H1 (cell line): ENCODE measurements at regions of chr1 and their contacts with region 1.

Region 1: DNA sequence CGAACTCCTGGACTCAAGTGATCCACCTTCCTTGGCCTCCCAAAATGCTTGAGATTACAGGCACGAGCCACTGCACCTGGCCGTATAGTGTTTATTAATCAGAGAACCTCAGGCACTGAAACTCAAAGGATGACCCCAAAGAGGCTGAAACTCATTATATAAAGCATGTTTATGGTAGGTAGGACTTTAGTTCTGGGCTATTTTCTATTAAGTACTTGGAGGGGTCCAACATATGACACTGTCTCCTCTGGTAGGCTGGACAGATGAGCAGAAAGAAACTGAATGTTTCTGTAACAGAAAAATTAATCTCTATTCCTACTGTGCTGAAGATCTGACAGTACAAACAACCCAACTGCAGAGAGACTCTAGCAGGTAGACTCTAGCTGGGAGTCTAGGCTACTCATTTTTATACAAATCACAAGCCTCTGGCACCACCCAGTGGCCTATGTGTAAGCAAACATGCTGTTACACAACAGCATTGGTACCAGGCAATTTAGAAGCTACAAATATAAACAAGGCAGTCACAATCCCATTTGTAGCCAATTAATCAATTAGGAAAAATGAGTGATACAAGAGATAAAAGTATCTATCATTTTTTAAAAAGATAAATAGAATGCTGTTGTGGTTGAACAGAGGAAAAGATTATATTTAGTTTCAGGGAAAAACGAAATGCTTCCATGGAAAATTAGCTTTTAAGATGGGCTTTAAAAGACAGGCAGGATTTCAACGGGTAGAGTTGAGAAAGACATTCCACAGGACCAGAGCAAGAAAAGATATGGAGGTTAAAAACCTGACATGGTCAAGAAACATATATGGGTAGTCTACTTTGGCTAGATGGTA is 10.4 kb downstream of the DCAF8 start:
- DNase-seq: no peak
- H3K4me3 ChIP-seq: no peak overlapping the region
- H3K27ac ChIP-seq: no peak overlapping the region
- H3K4me1 ChIP-seq: no peaks in the 10 kb centered on the region; a peak in 1 of 7 replicates
- H3K27me3 ChIP-seq: no peaks in the 10 kb centered on the region
- CTCF ChIP-seq: peak in 2 of 3 experiments; percentile 76 to 78; a peak in 3 of 4 replicates
- EP300 ChIP-seq: no peak
- POLR2A ChIP-seq: no peak
- RAD21 ChIP-seq: peak; percentile 84 to 91

Region 2: GRCh38 chr1:160066829-160067745 is 184.8 kb before region 1 on chr1:
- CTCF ChIA-PET with region 1: no interaction called
- POLR2A ChIA-PET with region 1: no interaction called
- DNase-seq: no peak
- H3K4me3 ChIP-seq: peak overlapping the region in 1 of 4 experiments; percentile 7; a peak in 1 of 8 replicates
- H3K27ac ChIP-seq: no peak overlapping the region
- H3K4me1 ChIP-seq: peaks cover 5 to 19% (median 11%) of the 10 kb centered on the region in 4 experiments
- H3K27me3 ChIP-seq: peaks cover 0 to 14% (median 10%) of the 10 kb centered on the region in 4 experiments; a peak in 6 of 7 replicates
- CTCF ChIP-seq: no peak
- EP300 ChIP-seq: no peak
- POLR2A ChIP-seq: no peak
- RAD21 ChIP-seq: no peak

Region 3: DNA sequence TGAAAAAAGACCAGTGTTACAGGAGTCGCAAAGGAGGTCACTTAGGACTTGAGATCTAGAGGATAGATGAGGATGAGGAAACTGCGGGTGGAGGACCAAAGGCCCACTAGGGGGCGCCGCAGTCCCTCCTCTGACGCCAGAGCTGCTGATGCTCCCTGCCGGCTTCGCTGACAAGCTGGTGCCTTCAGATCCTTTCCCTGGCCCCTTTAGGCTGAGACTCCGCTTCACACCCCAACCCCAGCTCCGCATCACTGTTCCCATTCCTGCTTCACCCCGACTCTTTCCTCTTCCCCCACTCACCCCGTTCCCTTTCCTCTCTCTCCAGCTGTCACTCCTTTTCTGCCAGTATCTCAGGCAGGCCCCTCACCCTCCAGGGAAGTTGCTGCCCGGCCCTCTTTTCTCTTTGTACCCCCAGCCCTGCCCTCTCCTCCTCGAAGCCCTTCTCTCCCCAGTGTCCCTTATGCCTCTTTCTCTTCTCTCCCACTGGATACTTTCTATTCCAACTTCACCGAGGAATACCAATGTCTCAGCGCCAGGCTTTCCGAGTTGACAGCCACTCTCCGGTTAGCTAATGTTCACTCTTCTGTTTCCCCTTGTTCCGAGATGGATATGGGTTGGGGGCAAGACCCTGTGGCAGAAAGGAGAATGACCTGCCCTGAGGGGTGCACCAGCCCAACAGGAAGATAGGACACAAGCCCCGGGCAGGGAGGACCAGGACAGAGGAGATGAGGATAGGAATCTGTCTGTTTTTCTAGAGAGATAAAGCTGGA is 166.0 kb before region 1 on chr1:
- CTCF ChIA-PET with region 1: interaction called, 14 read pairs
- POLR2A ChIA-PET with region 1: interaction called, 3 read pairs
- DNase-seq: peak; percentile 88 to 96
- H3K4me3 ChIP-seq: no peak overlapping the region
- H3K27ac ChIP-seq: no peak overlapping the region
- H3K4me1 ChIP-seq: peaks cover 0 to 5% (median 3%) of the 10 kb centered on the region in 4 experiments; a peak in 4 of 7 replicates
- H3K27me3 ChIP-seq: peaks cover 0 to 35% (median 27%) of the 10 kb centered on the region in 4 experiments; a peak in 6 of 7 replicates
- CTCF ChIP-seq: peak; percentile 91 to 99 (median 95)
- EP300 ChIP-seq: no peak
- POLR2A ChIP-seq: no peak
- RAD21 ChIP-seq: peak; percentile 83 to 88

Region 4: DNA sequence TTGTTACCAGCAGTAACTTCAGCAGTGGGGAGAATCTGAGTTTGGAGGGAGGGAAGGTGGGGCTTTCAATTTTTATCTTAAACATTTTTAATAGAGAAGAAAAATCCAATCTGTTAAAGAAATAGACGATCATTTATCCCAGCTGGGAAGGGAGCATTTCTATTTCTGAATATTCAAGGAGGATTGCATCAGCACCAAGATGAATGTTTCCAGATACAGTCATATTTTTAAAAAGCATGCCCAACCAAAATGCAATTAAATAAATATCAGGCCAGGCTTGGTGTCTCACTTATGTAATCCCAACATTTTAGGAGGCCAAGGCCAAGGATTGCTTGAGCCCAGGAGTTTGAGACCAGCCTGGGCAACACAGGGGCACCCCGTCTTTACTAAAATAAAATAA is 102.2 kb before region 1 on chr1:
- CTCF ChIA-PET with region 1: interaction called, 17 read pairs
- POLR2A ChIA-PET with region 1: no interaction called
- DNase-seq: no peak
- H3K4me3 ChIP-seq: no peak overlapping the region
- H3K27ac ChIP-seq: no peak overlapping the region
- H3K4me1 ChIP-seq: 0 out of 7 replicates have a peak, but pooled peaks cover 0 to 2% (median 0%) of the 10 kb centered on the region in 4 experiments
- H3K27me3 ChIP-seq: no peaks in the 10 kb centered on the region; a peak in 1 of 7 replicates
- CTCF ChIP-seq: no peak
- EP300 ChIP-seq: no peak
- POLR2A ChIP-seq: no peak
- RAD21 ChIP-seq: no peak

Region 5: GRCh38 chr1:160169553-160170399 is 82.1 kb before region 1 on chr1:
- CTCF ChIA-PET with region 1: interaction called, 19 read pairs
- POLR2A ChIA-PET with region 1: interaction called, 6 read pairs
- DNase-seq: peak; percentile 79 to 86
- H3K4me3 ChIP-seq: peak overlapping the region in 3 of 4 experiments; percentile 7 to 50 (median 13); a peak in 5 of 8 replicates
- H3K27ac ChIP-seq: peak overlapping the region; percentile 46; the same call in 1 of the 2 replicates
- H3K4me1 ChIP-seq: peaks cover 12 to 28% (median 22%) of the 10 kb centered on the region in 4 experiments; a peak in 6 of 7 replicates
- H3K27me3 ChIP-seq: peaks cover 0 to 2% (median under 1%) of the 10 kb centered on the region in 4 experiments; a peak in 2 of 7 replicates
- CTCF ChIP-seq: no peak
- EP300 ChIP-seq: peak in 1 of 2 experiments; percentile 96; a peak in 2 of 3 replicates
- POLR2A ChIP-seq: no peak
- RAD21 ChIP-seq: no peak

Region 6: DNA sequence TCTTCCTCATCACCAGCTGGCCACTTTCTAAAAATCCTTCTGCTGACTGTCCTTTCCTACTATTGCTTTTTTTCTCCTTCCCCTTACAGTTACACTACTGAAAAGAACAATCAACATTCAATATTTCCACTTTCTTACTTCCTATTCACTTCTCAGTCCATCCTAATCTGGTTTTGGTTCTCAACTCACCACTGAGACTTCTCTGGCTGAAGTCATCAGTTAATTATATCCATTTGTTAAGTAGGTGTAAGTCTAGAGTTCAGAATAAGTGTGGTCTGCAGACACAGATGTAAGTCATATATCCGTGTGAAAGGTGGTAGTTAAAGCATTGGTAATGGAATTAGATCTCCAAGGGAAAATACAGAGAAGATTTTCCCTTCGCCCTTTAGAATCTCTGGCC is 25.3 kb before region 1 on chr1:
- CTCF ChIA-PET with region 1: interaction called, 46 read pairs
- POLR2A ChIA-PET with region 1: interaction called, 3 read pairs
- DNase-seq: no peak
- H3K4me3 ChIP-seq: no peak overlapping the region
- H3K27ac ChIP-seq: no peak overlapping the region
- H3K4me1 ChIP-seq: no peaks in the 10 kb centered on the region
- H3K27me3 ChIP-seq: no peaks in the 10 kb centered on the region
- CTCF ChIP-seq: no peak
- EP300 ChIP-seq: no peak
- POLR2A ChIP-seq: no peak
- RAD21 ChIP-seq: no peak

Region 7: GRCh38 chr1:160261893-160262794 is 10.2 kb after region 1 on chr1 and contains the start of gene DCAF8:
- CTCF ChIA-PET with region 1: interaction called, 18 read pairs
- POLR2A ChIA-PET with region 1: interaction called, 37 read pairs
- DNase-seq: peak; percentile 92 to 98
- H3K4me3 ChIP-seq: peak within 1 kb of the TSS; percentile 91 to 99 (median 96)
- H3K27ac ChIP-seq: peak within 1 kb of the TSS; percentile 97
- H3K4me1 ChIP-seq: peaks cover 2 to 13% (median 5%) of the 10 kb centered on the region in 4 experiments; a peak in 6 of 7 replicates
- H3K27me3 ChIP-seq: no peaks in the 10 kb centered on the region
- CTCF ChIP-seq: no peak
- EP300 ChIP-seq: no peak
- POLR2A ChIP-seq: peak; percentile 98 to 99
- RAD21 ChIP-seq: no peak
- total RNA-seq, gene DCAF8: 110 and 113 TPM in 2 replicates

Region 8: GRCh38 chr1:160300173-160300572 is 48.3 kb after region 1 on chr1:
- CTCF ChIA-PET with region 1: no interaction called
- POLR2A ChIA-PET with region 1: no interaction called
- DNase-seq: no peak
- H3K4me3 ChIP-seq: no peak overlapping the region
- H3K27ac ChIP-seq: no peak overlapping the region
- H3K4me1 ChIP-seq: no peaks in the 10 kb centered on the region
- H3K27me3 ChIP-seq: no peaks in the 10 kb centered on the region
- CTCF ChIP-seq: no peak
- EP300 ChIP-seq: no peak
- POLR2A ChIP-seq: no peak
- RAD21 ChIP-seq: no peak

Region 9: GRCh38 chr1:160342953-160343869 is 91.3 kb after region 1 on chr1 and contains the starts of genes COPA and NCSTN:
- CTCF ChIA-PET with region 1: no interaction called
- POLR2A ChIA-PET with region 1: no interaction called
- DNase-seq: peak; percentile 71 to 90
- H3K4me3 ChIP-seq: peak within 1 kb of the TSS; percentile 88 to 98 (median 94)
- H3K27ac ChIP-seq: peak within 1 kb of the TSS; percentile 88
- H3K4me1 ChIP-seq: no peaks in the 10 kb centered on the region; a peak in 1 of 7 replicates
- H3K27me3 ChIP-seq: no peaks in the 10 kb centered on the region
- CTCF ChIP-seq: no peak
- EP300 ChIP-seq: no peak
- POLR2A ChIP-seq: peak; percentile 86 to 95
- RAD21 ChIP-seq: no peak
- total RNA-seq, gene COPA: 115 TPM in 2 replicates
- total RNA-seq, gene NCSTN: 64.7 and 70.1 TPM in 2 replicates

Region 10: GRCh38 chr1:160376525-160377131 is 124.7 kb after region 1 on chr1:
- CTCF ChIA-PET with region 1: interaction called, 14 read pairs
- POLR2A ChIA-PET with region 1: no interaction called
- DNase-seq: no peak
- H3K4me3 ChIP-seq: peak overlapping the region in 1 of 4 experiments; percentile 30; a peak in 1 of 8 replicates
- H3K27ac ChIP-seq: no peak overlapping the region
- H3K4me1 ChIP-seq: peaks cover 8 to 21% (median 16%) of the 10 kb centered on the region in 4 experiments
- H3K27me3 ChIP-seq: no peaks in the 10 kb centered on the region
- CTCF ChIP-seq: peak; percentile 20 to 100 (median 94)
- EP300 ChIP-seq: no peak
- POLR2A ChIP-seq: no peak
- RAD21 ChIP-seq: peak; percentile 98 to 99

Region 11: DNA sequence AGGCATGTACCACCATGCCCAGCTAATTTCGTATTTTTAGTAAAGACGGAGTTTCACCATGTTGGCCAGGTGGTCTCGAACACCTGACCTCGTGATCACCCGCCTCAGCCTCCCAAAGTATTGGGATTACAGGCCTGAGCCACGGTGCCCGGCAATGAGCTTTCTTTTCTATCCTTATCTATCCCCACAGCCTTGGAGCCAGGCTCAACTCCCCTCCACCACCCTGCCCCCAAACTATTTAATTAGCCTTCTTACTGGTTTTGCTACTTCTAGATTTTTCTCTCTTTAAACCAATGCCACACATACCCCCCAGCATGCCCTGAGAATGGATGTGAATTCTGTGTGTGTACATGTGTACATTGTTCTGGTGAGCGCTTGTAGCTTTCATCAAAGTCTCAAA is 142.8 kb after region 1 on chr1:
- CTCF ChIA-PET with region 1: no interaction called
- POLR2A ChIA-PET with region 1: no interaction called
- DNase-seq: no peak
- H3K4me3 ChIP-seq: no peak overlapping the region
- H3K27ac ChIP-seq: no peak overlapping the region
- H3K4me1 ChIP-seq: peaks cover 4 to 16% (median 10%) of the 10 kb centered on the region in 4 experiments
- H3K27me3 ChIP-seq: no peaks in the 10 kb centered on the region; a peak in 1 of 7 replicates
- CTCF ChIP-seq: no peak
- EP300 ChIP-seq: no peak
- POLR2A ChIP-seq: no peak
- RAD21 ChIP-seq: no peak